CD4-positive, alpha-beta T cell (primary cell): ENCODE measurements at regions of chr7 and their contacts with region 1.

Region 1: GRCh38 chr7:75679060-75679459 is 59.7 kb downstream of the HIP1 start:
- DNase-seq: no peak
- ATAC-seq: no peak
- H3K4me3 ChIP-seq: no peak overlapping the region
- H3K4me3 Mint-ChIP-seq: no peak overlapping the region
- H3K27ac ChIP-seq: no peak overlapping the region
- H3K27ac Mint-ChIP-seq: no peak overlapping the region
- H3K4me1 ChIP-seq: no peaks in the 10 kb centered on the region
- H3K4me1 Mint-ChIP-seq: no peaks in the 10 kb centered on the region
- H3K27me3 ChIP-seq: no peaks in the 10 kb centered on the region
- H3K27me3 Mint-ChIP-seq: no peaks in the 10 kb centered on the region
- CTCF ChIP-seq: no peak

Region 2: DNA sequence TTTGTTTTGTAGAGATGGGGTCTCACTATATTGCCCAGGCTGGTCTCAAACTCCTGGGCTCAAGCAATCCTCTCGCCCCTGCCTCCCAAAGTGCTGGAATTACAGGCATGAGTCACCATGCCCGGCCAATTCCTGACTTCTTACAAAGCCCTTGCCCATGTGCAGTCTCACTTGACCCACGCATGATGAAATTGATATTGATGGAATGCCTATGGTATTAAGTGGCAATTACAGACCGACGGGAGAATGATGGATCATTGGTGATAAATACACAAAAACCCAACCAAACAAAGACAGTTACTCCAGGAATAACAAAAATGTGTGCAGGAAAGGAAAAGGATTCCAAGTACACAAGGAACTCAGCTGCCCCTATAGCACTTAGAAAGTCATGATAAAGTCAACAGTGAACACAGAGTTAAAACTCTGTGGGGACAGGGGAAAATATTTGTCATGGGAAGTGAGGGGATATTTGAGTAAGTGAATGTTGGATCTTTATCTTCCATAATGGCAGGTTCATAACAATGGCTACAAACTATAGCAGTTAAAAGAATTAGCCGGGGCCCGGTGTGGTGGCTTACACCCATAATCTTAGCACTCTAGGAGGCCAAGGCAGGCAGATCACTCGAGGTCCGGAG is 38.0 kb after region 1 on chr7:
- CTCF ChIA-PET with region 1: no interaction called
- POLR2A ChIA-PET with region 1: no interaction called
- intact Hi-C with region 1: no loop called
- DNase-seq: no peak
- ATAC-seq: no peak
- H3K4me3 ChIP-seq: no peak overlapping the region
- H3K4me3 Mint-ChIP-seq: no peak overlapping the region
- H3K27ac ChIP-seq: no peak overlapping the region
- H3K27ac Mint-ChIP-seq: no peak overlapping the region
- H3K4me1 ChIP-seq: no peaks in the 10 kb centered on the region
- H3K4me1 Mint-ChIP-seq: peaks cover 7% of the 10 kb centered on the region
- H3K27me3 ChIP-seq: no peaks in the 10 kb centered on the region
- H3K27me3 Mint-ChIP-seq: no peaks in the 10 kb centered on the region
- CTCF ChIP-seq: no peak

Region 3: GRCh38 chr7:75835688-75836285 is 156.7 kb after region 1 on chr7:
- CTCF ChIA-PET with region 1: no interaction called
- POLR2A ChIA-PET with region 1: no interaction called
- intact Hi-C with region 1: no loop called
- DNase-seq: no peak
- ATAC-seq: no peak
- H3K4me3 ChIP-seq: no peak overlapping the region
- H3K4me3 Mint-ChIP-seq: no peak overlapping the region
- H3K27ac ChIP-seq: no peak overlapping the region
- H3K27ac Mint-ChIP-seq: no peak overlapping the region
- H3K4me1 ChIP-seq: no peaks in the 10 kb centered on the region
- H3K4me1 Mint-ChIP-seq: no peaks in the 10 kb centered on the region
- H3K27me3 ChIP-seq: no peaks in the 10 kb centered on the region
- H3K27me3 Mint-ChIP-seq: no peaks in the 10 kb centered on the region
- CTCF ChIP-seq: no peak

Region 4: DNA sequence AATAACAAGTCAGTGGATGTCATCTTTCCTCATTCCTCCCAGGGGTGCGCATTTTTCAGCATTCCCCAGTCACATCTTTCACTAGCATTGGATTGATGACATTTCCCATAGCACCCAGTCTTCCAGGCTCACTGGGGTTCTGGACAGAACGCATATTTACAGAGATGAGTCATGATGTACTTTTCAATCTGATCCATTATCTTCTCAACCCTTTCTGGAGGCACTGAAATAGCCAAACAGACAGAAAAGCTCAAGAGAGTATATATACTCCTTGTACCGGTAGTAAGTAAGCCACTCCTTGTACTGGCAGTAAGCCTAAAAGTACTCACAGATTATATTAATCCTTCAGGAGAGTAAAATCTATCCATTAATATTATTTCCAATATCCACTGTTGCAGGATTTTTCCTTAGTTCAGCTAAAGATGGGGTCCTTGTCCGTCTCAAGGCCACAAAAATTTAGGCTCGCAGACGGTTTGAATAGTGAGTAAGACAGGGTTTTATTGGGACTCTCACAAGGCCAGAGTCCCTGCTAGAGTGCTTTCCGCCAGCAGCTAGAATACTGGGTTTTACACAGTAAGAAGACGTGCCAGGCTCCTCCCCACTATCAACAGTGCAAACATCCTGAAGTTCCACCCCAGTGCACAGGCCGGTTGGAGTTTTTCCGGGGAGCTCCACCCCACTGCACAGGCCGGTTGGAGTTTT is 429.6 kb after region 1 on chr7:
- CTCF ChIA-PET with region 1: no interaction called
- POLR2A ChIA-PET with region 1: no interaction called
- intact Hi-C with region 1: loop called in 1 of 2 experiments (anchors 10 kb)
- DNase-seq: no peak
- ATAC-seq: no peak
- H3K4me3 ChIP-seq: no peak overlapping the region
- H3K4me3 Mint-ChIP-seq: no peak overlapping the region
- H3K27ac ChIP-seq: no peak overlapping the region
- H3K27ac Mint-ChIP-seq: no peak overlapping the region
- H3K4me1 ChIP-seq: no peaks in the 10 kb centered on the region
- H3K4me1 Mint-ChIP-seq: no peaks in the 10 kb centered on the region
- H3K27me3 ChIP-seq: no peaks in the 10 kb centered on the region
- H3K27me3 Mint-ChIP-seq: no peaks in the 10 kb centered on the region
- CTCF ChIP-seq: no peak